CD8-positive, alpha-beta T cell (primary cell): ENCODE measurements at regions of chr22 and their contacts with region 1.

Region 1: GRCh38 chr22:39439170-39439569 is 17.6 kb upstream of the MGAT3 start:
- DNase-seq: no peak
- ATAC-seq: no peak
- H3K4me3 ChIP-seq: no peak overlapping the region
- H3K4me3 Mint-ChIP-seq: no peak overlapping the region
- H3K27ac ChIP-seq: no peak overlapping the region
- H3K27ac Mint-ChIP-seq: no peak overlapping the region
- H3K4me1 ChIP-seq: peaks cover 17% of the 10 kb centered on the region
- H3K4me1 Mint-ChIP-seq: peaks cover 16% of the 10 kb centered on the region
- H3K27me3 ChIP-seq: peaks cover 0 to 3% of the 10 kb centered on the region in 2 experiments
- H3K27me3 Mint-ChIP-seq: peaks cover 15% of the 10 kb centered on the region
- CTCF ChIP-seq: no peak

Region 2: GRCh38 chr22:39471381-39472141 is 32.4 kb after region 1 on chr22:
- CTCF ChIA-PET with region 1: no interaction called
- POLR2A ChIA-PET with region 1: interaction called, 3 read pairs
- intact Hi-C with region 1: loop called in 1 of 2 experiments (anchors 5 kb)
- DNase-seq: peak in 2 of 9 experiments; percentile 28 to 58
- ATAC-seq: peak; percentile 65
- H3K4me3 ChIP-seq: no peak overlapping the region
- H3K4me3 Mint-ChIP-seq: peak overlapping the region; percentile 43
- H3K27ac ChIP-seq: no peak overlapping the region
- H3K27ac Mint-ChIP-seq: peak overlapping the region; percentile 78
- H3K4me1 ChIP-seq: peaks cover 24% of the 10 kb centered on the region
- H3K4me1 Mint-ChIP-seq: peaks cover 22% of the 10 kb centered on the region
- H3K27me3 ChIP-seq: no peaks in the 10 kb centered on the region
- H3K27me3 Mint-ChIP-seq: no peaks in the 10 kb centered on the region
- CTCF ChIP-seq: no peak

Region 3: DNA sequence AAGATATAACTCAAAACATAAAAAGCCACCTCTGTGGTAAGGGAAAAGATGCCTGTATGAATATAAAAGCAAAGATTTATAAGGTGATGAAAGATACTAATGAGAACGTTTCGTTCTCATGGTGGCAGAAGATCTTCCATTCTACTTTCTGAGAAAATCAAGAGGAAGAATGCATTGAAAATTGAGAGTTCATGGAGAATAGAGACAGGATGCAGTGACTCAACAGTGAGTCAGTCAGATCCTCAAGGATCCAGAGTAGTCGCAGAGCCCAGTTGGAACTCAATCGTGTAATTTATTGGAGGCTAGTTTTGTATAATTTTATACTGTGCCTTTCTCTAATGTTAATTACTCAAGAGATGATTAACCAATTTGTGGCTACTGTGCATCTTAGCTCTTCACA is 381.1 kb after region 1 on chr22:
- CTCF ChIA-PET with region 1: no interaction called
- POLR2A ChIA-PET with region 1: no interaction called
- intact Hi-C with region 1: no loop called
- DNase-seq: no peak
- ATAC-seq: no peak
- H3K4me3 ChIP-seq: no peak overlapping the region
- H3K4me3 Mint-ChIP-seq: no peak overlapping the region
- H3K27ac ChIP-seq: no peak overlapping the region
- H3K27ac Mint-ChIP-seq: no peak overlapping the region
- H3K4me1 ChIP-seq: no peaks in the 10 kb centered on the region
- H3K4me1 Mint-ChIP-seq: no peaks in the 10 kb centered on the region
- H3K27me3 ChIP-seq: no peaks in the 10 kb centered on the region
- H3K27me3 Mint-ChIP-seq: no peaks in the 10 kb centered on the region
- CTCF ChIP-seq: no peak